Breast epithelium (tissue), 4 donors: ENCODE measurements at regions of chr17 and their contacts with region 1.

Region 1: DNA sequence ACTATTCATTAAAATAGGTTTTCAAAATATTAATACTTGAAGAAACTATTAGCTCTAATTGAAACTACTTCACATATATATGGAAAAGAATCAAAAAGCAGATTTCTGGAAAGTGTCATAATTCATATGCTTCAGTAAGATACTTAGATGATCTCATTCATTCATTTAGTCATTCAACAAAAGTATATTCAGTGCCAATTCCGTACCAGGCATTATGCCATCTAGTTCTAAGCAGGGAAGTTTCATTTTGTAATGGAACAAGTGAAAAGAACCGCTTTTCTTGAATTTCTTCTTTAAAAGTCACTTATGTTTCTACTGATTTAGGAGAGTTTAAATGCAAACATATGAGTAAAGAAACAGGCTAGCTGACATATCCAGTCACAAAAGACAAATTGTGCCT is 118.3 kb upstream of the FAM20A start:
- DNase-seq: no peak
- H3K4me3 ChIP-seq: no peak overlapping the region
- H3K27ac ChIP-seq: no peak overlapping the region
- H3K4me1 ChIP-seq: no peaks in the 10 kb centered on the region
- H3K27me3 ChIP-seq: no peaks in the 10 kb centered on the region
- CTCF ChIP-seq: no peak
- POLR2A ChIP-seq: no peak

Region 2: GRCh38 chr17:68145088-68145487 is 574.3 kb before region 1 on chr17:
- intact Hi-C with region 1: loop called (anchors 5 kb)
- DNase-seq: no peak
- H3K4me3 ChIP-seq: no peak overlapping the region
- H3K27ac ChIP-seq: no peak overlapping the region
- H3K4me1 ChIP-seq: no peaks in the 10 kb centered on the region
- H3K27me3 ChIP-seq: no peaks in the 10 kb centered on the region
- CTCF ChIP-seq: no peak
- POLR2A ChIP-seq: no peak